ENCODE measurements at regions of chr1 and their contacts with region 1.

Region 1: GRCh38 chr1:3618881-3619671 is 5.7 kb upstream of the TPRG1L start:
- DNase-seq: peak; percentile 93
- H3K4me3 Mint-ChIP-seq: no peak overlapping the region
- H3K27ac Mint-ChIP-seq: no peak overlapping the region
- H3K4me1 Mint-ChIP-seq: peaks cover 19% of the 10 kb centered on the region
- H3K27me3 Mint-ChIP-seq: peaks cover 6% of the 10 kb centered on the region

Region 2: DNA sequence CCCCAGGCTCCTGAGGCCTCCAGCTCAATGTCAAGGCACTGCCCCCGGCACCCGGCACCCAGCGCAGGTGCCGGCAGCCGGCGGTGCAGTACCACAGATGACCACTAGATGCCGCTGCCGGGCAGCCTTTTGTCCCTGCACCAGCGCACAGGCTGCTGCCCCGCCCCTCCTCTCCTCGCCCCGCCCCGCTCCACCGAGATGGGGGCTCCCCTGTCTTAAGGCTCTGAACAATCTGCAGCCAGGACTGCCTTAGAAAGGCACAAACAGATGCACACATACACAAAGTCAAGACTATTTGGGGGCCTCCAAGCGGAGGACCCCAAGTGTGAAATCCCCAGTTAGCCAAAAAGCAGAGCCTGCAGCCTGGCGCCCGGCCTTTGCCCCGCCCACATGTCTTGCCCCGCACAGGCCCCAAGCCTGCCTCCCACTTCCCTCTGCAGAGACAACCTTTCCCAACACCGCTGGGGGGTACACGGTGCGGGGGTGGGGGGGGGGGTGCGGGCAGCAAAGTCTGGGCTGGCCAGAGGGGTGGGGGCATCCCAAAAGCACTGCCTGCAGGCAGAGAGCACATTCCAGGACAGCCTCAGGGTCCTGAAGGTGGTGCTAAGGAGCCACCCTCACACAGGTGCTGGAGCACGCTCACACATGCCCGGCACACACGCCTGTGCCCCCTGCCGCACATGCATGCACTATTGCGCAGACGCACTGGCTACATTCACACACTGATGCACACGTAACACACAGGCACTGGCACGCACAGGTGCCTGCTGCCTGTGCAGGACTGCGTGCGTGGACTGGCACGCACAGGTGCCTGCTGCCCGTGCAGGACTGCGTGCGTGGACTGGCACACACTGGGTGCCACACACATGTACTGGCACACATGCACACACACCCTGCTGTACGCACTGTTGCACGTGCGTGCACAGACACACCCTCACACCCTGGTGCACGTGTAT is 127.5 kb before region 1 on chr1:
- intact Hi-C with region 1: loop called (anchors 1 kb)
- DNase-seq: peak; percentile 95
- H3K4me3 Mint-ChIP-seq: no peak overlapping the region
- H3K27ac Mint-ChIP-seq: no peak overlapping the region
- H3K4me1 Mint-ChIP-seq: peaks cover 2% of the 10 kb centered on the region
- H3K27me3 Mint-ChIP-seq: no peaks in the 10 kb centered on the region

Region 3: DNA sequence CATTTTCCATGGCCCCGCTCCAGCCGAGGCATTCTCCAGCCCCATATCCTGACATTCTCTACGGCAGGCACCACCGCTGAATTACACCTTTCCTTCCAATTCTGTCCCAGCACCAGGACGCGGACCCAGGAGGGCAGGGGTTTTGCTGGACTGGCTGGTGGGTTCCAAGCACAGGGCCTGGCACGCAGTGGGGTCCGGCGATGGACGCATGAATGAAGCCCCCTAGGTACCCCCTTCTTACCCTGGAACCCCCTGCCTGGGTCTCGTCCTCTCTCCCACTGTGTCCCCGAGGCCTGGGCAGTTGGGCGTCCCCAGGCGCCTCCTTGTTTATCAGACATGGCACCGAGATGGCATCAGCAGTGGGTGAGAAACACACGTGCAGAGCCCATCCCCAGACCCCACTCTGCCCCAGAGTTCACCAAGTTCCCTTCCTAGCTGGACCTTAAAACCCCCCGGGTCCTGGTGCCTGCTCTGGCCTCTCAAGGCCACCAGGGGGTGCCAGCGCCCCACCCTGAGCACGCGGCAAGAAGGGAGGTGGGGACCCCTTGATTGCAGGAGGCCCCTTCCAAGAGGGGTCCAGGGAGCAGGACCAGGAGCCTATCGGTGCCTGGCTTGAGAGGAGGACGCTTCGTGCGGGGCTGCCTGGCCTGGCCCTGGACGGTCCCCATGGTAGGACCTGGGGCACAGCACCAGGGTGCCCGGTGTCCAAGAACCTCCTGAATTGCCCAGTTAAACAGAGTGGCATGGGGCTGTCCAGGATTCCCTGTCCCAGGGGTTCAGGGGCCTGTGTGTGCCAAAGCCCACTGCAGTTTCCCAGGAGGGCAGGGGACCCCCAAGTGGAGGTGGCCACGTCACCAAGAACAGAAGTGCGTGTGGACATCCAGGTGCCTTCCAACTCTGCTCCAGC is 53.9 kb before region 1 on chr1:
- intact Hi-C with region 1: loop called (anchors 1 kb)
- DNase-seq: peak; percentile 73
- H3K4me3 Mint-ChIP-seq: no peak overlapping the region
- H3K27ac Mint-ChIP-seq: no peak overlapping the region
- H3K4me1 Mint-ChIP-seq: no peaks in the 10 kb centered on the region
- H3K27me3 Mint-ChIP-seq: no peaks in the 10 kb centered on the region

Measured in activated CD4-positive, alpha-beta T cell treated with anti-CD3 and anti-CD28 coated beads, Interleukin-2, amount 10 ng/mL, durations not matched to agents 24 days and 14 days (primary cell).